A549 (cell line): ENCODE measurements at regions of chr14 and their contacts with region 1.

Region 1: GRCh38 chr14:22822571-22823098 is 7.1 kb upstream of the MRPL52 start:
- DNase-seq: peak; percentile 83 to 88
- ATAC-seq: peak; percentile 68 to 90
- H3K4me3 ChIP-seq: peak overlapping the region; percentile 33
- H3K27ac ChIP-seq: peak overlapping the region; percentile 82 to 93
- H3K4me1 ChIP-seq: peaks cover 74% of the 10 kb centered on the region
- CTCF ChIP-seq: peak; percentile 85
- EP300 ChIP-seq: no peak
- POLR2A ChIP-seq: no peak
- RAD21 ChIP-seq: peak; percentile 85 to 94

Region 2: DNA sequence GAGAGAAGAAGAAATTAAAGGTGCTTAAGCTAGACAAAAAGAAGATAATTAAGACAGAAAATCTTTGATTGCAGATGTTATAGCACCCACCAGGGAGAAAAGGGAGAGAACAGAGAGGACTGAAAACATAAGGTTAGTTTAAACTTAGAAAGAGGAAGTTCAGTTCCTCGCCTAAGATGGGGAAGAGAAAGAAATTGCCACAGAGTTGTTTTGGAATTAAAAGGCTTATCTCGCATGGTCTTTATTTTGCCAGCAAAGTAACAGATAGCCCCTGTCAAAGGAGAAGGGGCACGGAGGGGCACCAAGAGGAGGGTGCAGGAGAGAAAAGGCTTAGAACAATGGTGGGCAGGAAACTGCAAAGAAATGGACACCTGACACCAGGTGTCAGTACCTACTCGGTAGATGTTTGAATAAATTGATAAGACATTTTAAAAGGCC is 74.0 kb before region 1 on chr14:
- CTCF ChIA-PET with region 1: no interaction called
- POLR2A ChIA-PET with region 1: no interaction called
- DNase-seq: no peak
- ATAC-seq: no peak
- H3K4me3 ChIP-seq: no peak overlapping the region
- H3K27ac ChIP-seq: no peak overlapping the region
- H3K4me1 ChIP-seq: no peaks in the 10 kb centered on the region
- CTCF ChIP-seq: no peak
- EP300 ChIP-seq: no peak
- POLR2A ChIP-seq: no peak
- RAD21 ChIP-seq: no peak

Region 3: GRCh38 chr14:22836301-22837113 is 13.9 kb after region 1 on chr14 and contains the start of gene MMP14:
- CTCF ChIA-PET with region 1: interaction called, 29 read pairs
- POLR2A ChIA-PET with region 1: no interaction called
- DNase-seq: no peak
- ATAC-seq: no peak
- H3K4me3 ChIP-seq: 0 out of 3 replicates have a peak within 1 kb of the TSS, but pooled peaks have one; percentile 18
- H3K27ac ChIP-seq: peak within 1 kb of the TSS in 1 of 2 experiments; percentile 38; a peak in 1 of 6 replicates
- H3K4me1 ChIP-seq: no peaks in the 10 kb centered on the region
- CTCF ChIP-seq: no peak
- EP300 ChIP-seq: no peak
- POLR2A ChIP-seq: no peak
- RAD21 ChIP-seq: no peak
- polyA plus RNA-seq, gene MMP14: 1.9 and 2.5 TPM in 2 replicates

Region 4: DNA sequence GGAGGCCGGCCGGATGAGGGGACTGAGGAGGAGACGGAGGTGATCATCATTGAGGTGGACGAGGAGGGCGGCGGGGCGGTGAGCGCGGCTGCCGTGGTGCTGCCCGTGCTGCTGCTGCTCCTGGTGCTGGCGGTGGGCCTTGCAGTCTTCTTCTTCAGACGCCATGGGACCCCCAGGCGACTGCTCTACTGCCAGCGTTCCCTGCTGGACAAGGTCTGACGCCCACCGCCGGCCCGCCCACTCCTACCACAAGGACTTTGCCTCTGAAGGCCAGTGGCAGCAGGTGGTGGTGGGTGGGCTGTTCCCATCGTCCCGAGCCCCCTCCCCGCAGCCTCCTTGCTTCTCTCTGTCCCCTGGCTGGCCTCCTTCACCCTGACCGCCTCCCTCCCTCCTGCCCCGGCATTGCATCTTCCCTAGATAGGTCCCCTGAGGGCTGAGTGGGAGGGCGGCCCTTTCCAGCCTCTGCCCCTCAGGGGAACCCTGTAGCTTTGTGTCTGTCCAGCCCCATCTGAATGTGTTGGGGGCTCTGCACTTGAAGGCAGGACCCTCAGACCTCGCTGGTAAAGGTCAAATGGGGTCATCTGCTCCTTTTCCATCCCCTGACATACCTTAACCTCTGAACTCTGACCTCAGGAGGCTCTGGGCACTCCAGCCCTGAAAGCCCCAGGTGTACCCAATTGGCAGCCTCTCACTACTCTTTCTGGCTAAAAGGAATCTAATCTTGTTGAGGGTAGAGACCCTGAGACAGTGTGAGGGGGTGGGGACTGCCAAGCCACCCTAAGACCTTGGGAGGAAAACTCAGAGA is 23.4 kb after region 1 on chr14:
- CTCF ChIA-PET with region 1: interaction called, 259 read pairs
- POLR2A ChIA-PET with region 1: no interaction called
- DNase-seq: no peak
- ATAC-seq: no peak
- H3K4me3 ChIP-seq: no peak overlapping the region
- H3K27ac ChIP-seq: no peak overlapping the region
- H3K4me1 ChIP-seq: no peaks in the 10 kb centered on the region
- CTCF ChIP-seq: no peak
- EP300 ChIP-seq: no peak
- POLR2A ChIP-seq: no peak
- RAD21 ChIP-seq: no peak

Region 5: GRCh38 chr14:22865424-22866405 is 43.1 kb after region 1 on chr14:
- CTCF ChIA-PET with region 1: interaction called, 18 read pairs
- POLR2A ChIA-PET with region 1: no interaction called
- DNase-seq: no peak
- ATAC-seq: peak; percentile 52 to 56; a peak in 4 of 6 replicates
- H3K4me3 ChIP-seq: no peak overlapping the region
- H3K27ac ChIP-seq: no peak overlapping the region
- H3K4me1 ChIP-seq: peaks cover 12% of the 10 kb centered on the region
- CTCF ChIP-seq: no peak
- EP300 ChIP-seq: no peak
- POLR2A ChIP-seq: no peak
- RAD21 ChIP-seq: no peak

Region 6: GRCh38 chr14:22872033-22872832 is 49.6 kb after region 1 on chr14:
- CTCF ChIA-PET with region 1: interaction called, 12 read pairs
- POLR2A ChIA-PET with region 1: no interaction called
- DNase-seq: peak; percentile 87 to 90
- ATAC-seq: peak; percentile 72 to 82
- H3K4me3 ChIP-seq: peak overlapping the region; percentile 78
- H3K27ac ChIP-seq: peak overlapping the region; percentile 94 to 98
- H3K4me1 ChIP-seq: peaks cover 21% of the 10 kb centered on the region
- CTCF ChIP-seq: peak; percentile 91
- EP300 ChIP-seq: no peak
- POLR2A ChIP-seq: 0 out of 2 replicates have a peak, but pooled peaks have one; percentile 24
- RAD21 ChIP-seq: peak; percentile 69 to 75

Region 7: DNA sequence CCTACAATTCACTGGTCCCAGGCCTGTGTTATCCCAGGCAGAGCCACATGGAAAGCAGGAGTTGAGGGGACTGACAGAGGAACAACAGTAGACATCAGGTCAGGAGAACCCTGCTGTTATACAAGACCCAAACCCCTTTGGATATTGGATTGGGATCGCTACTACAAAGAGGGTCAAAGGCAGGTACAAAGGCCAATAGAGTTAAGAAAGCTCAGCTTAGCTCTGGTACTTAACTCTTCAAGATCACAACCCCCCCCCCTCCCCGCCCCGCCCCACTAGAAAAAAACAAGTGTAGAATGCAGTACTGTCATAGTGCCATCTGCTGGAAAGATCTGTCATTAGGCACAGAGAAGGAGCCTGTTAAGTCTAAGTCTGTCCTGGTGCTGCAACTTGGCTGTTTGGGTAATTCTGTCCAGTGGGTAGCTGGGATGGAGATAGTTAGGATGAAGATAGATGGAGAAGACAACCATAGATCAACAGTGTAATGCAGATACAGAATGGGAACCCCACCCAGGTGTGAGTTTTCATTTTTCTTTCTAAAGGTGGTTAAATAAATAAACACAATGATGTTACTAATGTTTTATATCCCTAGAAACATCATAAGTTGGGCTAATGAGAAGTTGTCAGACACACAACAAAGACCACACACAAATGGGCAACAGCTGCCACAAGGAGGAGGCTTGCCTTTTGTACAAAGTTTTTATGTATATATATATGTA is 77.6 kb after region 1 on chr14:
- CTCF ChIA-PET with region 1: interaction called, 25 read pairs
- POLR2A ChIA-PET with region 1: interaction called, 3 read pairs
- DNase-seq: peak; percentile 77 to 81
- ATAC-seq: peak; percentile 81 to 83
- H3K4me3 ChIP-seq: no peak overlapping the region
- H3K27ac ChIP-seq: no peak overlapping the region; a peak in 1 of 6 replicates
- H3K4me1 ChIP-seq: peaks cover 17% of the 10 kb centered on the region
- CTCF ChIP-seq: peak; percentile 72
- EP300 ChIP-seq: no peak
- POLR2A ChIP-seq: no peak
- RAD21 ChIP-seq: peak; percentile 62 to 70

Region 8: DNA sequence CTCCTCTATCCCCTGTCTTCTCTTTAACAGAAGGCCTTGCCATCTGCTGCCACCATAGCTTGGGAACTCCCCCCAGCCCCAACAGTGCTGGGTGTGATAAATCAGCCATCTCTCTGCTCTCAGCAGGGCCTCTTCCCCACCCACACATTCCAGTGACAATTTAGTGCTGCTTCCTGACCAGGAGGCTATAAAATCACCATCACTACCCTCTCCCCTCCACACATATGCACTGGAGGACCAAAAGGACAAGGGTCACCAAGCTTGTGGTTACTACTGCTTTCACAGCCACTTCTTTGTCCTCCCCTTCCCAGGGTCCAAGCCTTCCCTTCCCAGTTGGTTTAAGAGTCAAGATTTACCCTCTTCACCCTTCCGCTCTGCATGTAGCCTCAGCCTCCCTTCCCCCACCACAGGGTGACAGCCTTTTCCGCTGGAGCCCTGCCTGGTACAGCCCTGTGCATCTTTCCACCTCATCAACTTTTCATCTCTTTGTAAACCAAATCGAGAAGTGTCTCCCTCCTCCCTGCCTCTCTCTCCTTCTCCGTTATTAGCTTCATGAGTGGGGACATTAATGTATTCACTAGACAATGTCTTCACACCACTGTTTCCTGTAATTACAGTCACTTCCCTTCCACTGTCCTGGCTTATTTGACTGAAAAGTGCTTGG is 202.6 kb after region 1 on chr14:
- CTCF ChIA-PET with region 1: no interaction called
- POLR2A ChIA-PET with region 1: no interaction called
- DNase-seq: no peak
- ATAC-seq: peak in 1 of 2 experiments; percentile 19; a peak in 1 of 6 replicates
- H3K4me3 ChIP-seq: no peak overlapping the region
- H3K27ac ChIP-seq: no peak overlapping the region
- H3K4me1 ChIP-seq: no peaks in the 10 kb centered on the region
- CTCF ChIP-seq: no peak
- EP300 ChIP-seq: no peak
- POLR2A ChIP-seq: no peak
- RAD21 ChIP-seq: no peak

Region 9: DNA sequence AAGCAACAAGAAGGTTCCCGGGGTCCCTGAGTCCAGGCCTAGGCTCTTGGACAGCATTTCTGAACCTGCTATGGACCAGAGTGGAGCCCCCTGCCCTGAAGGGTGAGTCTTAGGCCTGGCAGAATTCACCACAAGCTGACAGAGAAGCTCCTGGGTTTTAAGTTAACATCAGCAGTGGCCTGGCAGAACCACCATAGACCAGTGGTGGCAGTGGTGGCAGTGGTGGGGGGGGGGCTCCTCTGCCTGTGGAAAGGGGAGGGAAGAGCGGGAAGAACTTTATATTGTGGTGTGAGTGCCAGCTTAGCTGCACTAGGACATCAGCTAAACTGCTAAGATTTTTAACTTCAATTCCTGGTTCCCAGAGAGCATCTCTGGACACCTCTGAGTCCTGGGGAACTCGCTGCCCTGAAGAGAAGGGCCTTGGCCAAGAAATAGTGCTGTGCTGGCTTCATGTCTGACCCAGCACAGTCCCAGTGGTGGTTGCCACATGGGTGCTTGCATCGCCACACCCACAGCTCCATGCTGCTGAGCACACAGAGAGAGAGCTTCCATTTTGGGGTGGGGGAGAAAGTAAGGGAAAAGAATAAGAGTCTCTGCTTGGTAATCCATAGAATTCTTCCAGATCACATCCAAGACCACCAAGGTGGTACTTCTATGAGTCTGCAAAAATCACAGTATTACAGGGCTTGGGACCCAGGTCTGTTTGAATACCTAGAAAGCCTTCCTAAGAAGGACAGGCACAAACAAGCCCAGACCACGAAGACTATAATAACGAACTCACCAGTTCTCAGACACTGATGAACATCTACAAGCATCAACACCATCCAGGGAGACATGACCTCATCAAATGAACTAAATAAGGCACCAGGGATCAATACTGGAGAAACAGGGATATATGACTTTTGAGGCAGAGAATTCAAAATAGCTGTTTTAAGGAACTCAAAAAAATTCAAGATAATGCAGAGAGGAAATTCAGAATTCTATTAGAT is 394.7 kb after region 1 on chr14:
- CTCF ChIA-PET with region 1: no interaction called
- POLR2A ChIA-PET with region 1: no interaction called
- DNase-seq: no peak
- ATAC-seq: no peak
- H3K4me3 ChIP-seq: no peak overlapping the region
- H3K27ac ChIP-seq: no peak overlapping the region
- H3K4me1 ChIP-seq: no peaks in the 10 kb centered on the region
- CTCF ChIP-seq: no peak
- EP300 ChIP-seq: no peak
- POLR2A ChIP-seq: no peak
- RAD21 ChIP-seq: no peak